OCI-LY7 (cell line): ENCODE measurements at regions of chr1 and their contacts with region 1.

Region 1: DNA sequence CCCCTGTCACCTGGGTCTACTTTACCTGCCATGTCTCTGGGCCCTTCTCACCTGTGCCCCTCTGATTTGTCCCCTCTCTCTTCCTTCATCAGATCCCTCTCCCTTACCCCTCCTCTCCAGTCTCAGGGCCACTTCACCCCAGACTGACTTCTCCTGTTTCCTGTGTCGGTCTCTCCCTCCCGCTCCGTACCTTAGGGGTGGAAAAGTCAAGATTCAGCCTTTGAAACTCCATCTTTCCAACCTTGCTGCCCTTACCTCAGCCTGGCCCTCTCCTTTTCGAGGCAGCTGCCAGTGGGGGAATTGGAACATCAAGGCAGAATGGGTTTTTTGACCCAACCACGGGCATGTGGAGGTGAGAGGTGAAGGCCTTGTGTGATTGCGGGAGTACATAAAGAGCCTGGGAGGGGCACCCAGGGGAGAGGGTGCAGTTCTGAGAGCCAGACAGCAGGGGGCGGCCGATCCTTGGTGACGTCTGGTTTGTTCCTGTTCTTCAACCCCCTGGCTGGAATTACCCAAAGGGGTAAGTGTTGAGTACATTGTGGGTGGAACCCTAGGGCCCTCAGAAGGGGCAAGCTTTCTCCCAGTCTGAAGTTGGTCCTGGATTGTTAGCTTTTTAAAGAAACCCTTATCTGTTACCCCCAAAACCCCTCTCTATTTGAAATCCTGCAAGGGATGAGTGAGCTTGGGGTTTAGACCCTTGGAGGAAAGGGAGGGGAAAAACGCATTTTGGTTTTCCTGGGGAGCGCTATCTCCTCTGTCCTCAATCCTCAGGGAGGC is 12.3 kb upstream of the DMBX1 start:
- DNase-seq: peak; percentile 71
- H3K4me3 ChIP-seq: no peak overlapping the region
- H3K27ac ChIP-seq: no peak overlapping the region
- H3K4me1 ChIP-seq: no peaks in the 10 kb centered on the region
- CTCF ChIP-seq: peak; percentile 90

Region 2: GRCh38 chr1:46442317-46443161 is 34.8 kb before region 1 on chr1:
- CTCF ChIA-PET with region 1: interaction called, 3 read pairs
- POLR2A ChIA-PET with region 1: no interaction called
- intact Hi-C with region 1: loop called (anchors 2 kb)
- DNase-seq: peak; percentile 70
- H3K4me3 ChIP-seq: no peak overlapping the region
- H3K27ac ChIP-seq: no peak overlapping the region
- H3K4me1 ChIP-seq: peaks cover 4% of the 10 kb centered on the region
- CTCF ChIP-seq: peak; percentile 89

Region 3: DNA sequence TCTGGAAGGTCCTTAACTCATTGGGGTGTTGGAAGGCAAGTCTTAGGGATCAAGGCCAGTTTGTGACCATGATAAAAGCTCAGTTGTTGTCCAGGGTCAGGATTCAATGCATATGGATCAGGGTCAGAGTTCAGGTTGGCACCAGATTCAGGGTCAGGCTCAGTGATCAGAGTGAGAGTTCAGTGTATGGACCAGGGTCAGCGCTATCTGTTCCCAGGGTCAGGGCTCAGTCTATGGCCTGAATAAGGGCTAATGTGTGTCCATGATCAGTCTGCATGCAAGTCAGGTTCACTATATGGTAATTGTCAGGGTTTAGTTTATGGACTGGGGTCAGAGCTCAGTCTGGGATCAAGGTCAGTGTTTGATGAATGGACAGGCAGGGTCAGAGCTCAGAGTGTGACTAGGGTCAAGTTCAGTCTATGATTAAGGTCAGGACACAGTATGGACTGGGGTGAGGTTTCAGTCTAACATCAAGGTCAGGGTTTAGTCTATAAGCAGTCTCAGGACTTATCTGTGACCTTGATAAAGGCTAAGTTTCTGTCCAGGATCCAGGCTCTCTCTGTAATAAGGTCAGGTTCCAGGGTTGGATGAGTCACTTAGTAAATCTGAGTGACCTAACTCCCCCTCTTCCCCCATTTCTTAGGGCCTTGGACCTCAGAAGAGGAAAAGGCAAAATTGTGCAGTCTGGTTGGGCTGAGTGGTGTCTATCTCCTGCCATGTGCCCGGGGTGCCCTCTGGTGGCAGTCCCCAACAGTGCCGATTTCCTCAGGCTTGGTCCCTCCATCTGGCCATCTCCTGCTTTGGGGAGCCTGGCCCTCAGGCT is 50.3 kb after region 1 on chr1:
- CTCF ChIA-PET with region 1: interaction called, 6 read pairs
- POLR2A ChIA-PET with region 1: no interaction called
- intact Hi-C with region 1: loop called (anchors 1 kb)
- DNase-seq: peak; percentile 67
- H3K4me3 ChIP-seq: no peak overlapping the region
- H3K27ac ChIP-seq: no peak overlapping the region
- H3K4me1 ChIP-seq: no peaks in the 10 kb centered on the region
- CTCF ChIP-seq: peak; percentile 91

Region 4: GRCh38 chr1:46547481-46548383 is 70.4 kb after region 1 on chr1:
- CTCF ChIA-PET with region 1: no interaction called
- POLR2A ChIA-PET with region 1: no interaction called
- intact Hi-C with region 1: loop called (anchors 5 kb)
- DNase-seq: peak; percentile 72
- H3K4me3 ChIP-seq: no peak overlapping the region
- H3K27ac ChIP-seq: no peak overlapping the region
- H3K4me1 ChIP-seq: no peaks in the 10 kb centered on the region
- CTCF ChIP-seq: peak; percentile 81

Region 5: GRCh38 chr1:46724991-46725735 is 247.8 kb after region 1 on chr1:
- CTCF ChIA-PET with region 1: no interaction called
- POLR2A ChIA-PET with region 1: no interaction called
- intact Hi-C with region 1: loop called (anchors 2 kb)
- DNase-seq: peak; percentile 77
- H3K4me3 ChIP-seq: no peak overlapping the region
- H3K27ac ChIP-seq: no peak overlapping the region
- H3K4me1 ChIP-seq: no peaks in the 10 kb centered on the region
- CTCF ChIP-seq: peak; percentile 87